Activated T-helper 2 cell treated with anti-CD3 and anti-CD28 coated beads, Interferon-gamma antibody, Interleukin-2, Interleukin-4, amounts not matched to agents 10 μg/mL and 5 μg/mL and 100 μg/mL, durations not matched to agents 14 hours and 24 hours and 36 hours (primary cell): ENCODE measurements at regions of chr19 and their contacts with region 1.

Region 1: GRCh38 chr19:46487802-46488445 is 7.7 kb downstream of the PNMA8B start:
- DNase-seq: peak; percentile 66
- H3K4me3 Mint-ChIP-seq: no peak overlapping the region
- H3K27ac Mint-ChIP-seq: no peak overlapping the region
- H3K4me1 Mint-ChIP-seq: peaks cover 3% of the 10 kb centered on the region
- H3K27me3 Mint-ChIP-seq: peaks cover 64% of the 10 kb centered on the region

Region 2: GRCh38 chr19:46049597-46049996 is 438.3 kb before region 1 on chr19:
- intact Hi-C with region 1: no loop called
- DNase-seq: no peak
- H3K4me3 Mint-ChIP-seq: no peak overlapping the region
- H3K27ac Mint-ChIP-seq: no peak overlapping the region
- H3K4me1 Mint-ChIP-seq: no peaks in the 10 kb centered on the region
- H3K27me3 Mint-ChIP-seq: peaks cover 69% of the 10 kb centered on the region

Region 3: GRCh38 chr19:46283771-46284170 is 204.2 kb before region 1 on chr19:
- intact Hi-C with region 1: loop called (anchors 2 kb)
- DNase-seq: no peak
- H3K4me3 Mint-ChIP-seq: no peak overlapping the region
- H3K27ac Mint-ChIP-seq: no peak overlapping the region
- H3K4me1 Mint-ChIP-seq: no peaks in the 10 kb centered on the region
- H3K27me3 Mint-ChIP-seq: peaks cover 7% of the 10 kb centered on the region

Region 4: DNA sequence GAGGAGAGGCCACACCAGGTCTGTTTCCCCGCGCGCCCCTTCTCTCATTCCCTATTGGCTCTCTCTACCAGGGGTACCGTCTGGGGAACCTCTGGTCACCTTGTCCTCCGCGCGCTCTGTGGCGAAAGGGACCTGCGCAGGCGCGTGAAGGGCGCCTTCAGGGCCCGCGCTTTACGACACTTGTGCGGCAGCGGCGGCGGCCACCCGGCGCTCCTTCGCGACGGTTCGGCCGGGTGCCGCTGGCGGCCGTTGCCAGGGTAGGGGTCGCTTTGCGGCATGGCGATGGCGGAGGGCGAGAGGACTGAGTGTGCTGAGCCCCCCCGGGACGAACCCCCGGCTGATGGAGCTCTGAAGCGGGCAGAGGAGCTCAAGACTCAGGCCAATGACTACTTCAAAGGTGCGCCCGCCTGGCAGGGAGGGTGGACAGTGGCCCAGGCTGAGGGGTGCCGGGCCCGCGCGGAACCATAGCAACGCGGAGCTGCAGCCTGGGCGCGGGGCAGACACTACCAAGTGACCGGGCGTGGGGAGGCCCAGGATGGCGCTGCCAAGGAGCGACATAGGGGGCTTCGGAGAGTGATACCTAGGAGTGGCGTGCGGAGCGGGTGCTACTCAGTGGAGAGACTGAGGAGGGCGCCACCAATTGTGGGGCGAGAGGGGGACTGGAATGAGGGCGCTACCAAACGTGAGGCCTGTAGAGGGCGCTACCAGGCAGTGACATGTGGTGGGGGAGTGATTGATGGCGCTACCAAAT is 140.9 kb before region 1 on chr19 and contains the start of gene PPP5C:
- intact Hi-C with region 1: no loop called
- DNase-seq: peak; percentile 86
- H3K4me3 Mint-ChIP-seq: peak within 1 kb of the TSS; percentile 89
- H3K27ac Mint-ChIP-seq: peak within 1 kb of the TSS; percentile 86
- H3K4me1 Mint-ChIP-seq: peaks cover 46% of the 10 kb centered on the region
- H3K27me3 Mint-ChIP-seq: peaks cover 14% of the 10 kb centered on the region
- total RNA-seq, gene PPP5C: 136 TPM in 2 replicates

Region 5: DNA sequence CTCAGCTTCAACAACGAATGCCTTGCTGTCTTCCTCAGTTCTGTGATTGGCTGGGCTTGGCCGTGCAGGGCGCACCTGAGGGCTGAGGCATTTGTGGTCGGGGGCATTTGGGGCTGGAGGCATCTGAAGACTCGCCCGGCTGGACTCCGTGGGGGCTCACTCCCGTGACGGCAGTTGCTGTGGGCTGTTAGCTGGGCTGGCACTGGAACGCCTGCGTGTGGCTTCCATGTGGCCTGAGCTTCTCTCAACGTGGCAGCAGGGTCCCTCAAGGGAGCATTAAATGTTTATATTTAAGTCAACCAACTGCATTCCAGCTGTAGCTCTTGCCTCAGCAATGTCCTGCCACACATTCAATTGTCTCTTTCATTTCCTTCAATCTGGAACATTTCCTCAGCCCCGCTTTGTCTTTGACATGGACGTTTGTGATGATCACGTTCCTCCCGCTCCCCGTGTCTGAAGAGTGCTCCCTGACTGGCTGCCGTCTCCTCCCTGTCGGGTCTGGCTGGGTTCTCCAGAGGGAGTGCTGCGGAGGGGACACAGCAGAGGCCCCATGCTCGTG is 95.6 kb before region 1 on chr19:
- intact Hi-C with region 1: loop called (anchors 2 kb)
- DNase-seq: no peak
- H3K4me3 Mint-ChIP-seq: no peak overlapping the region
- H3K27ac Mint-ChIP-seq: no peak overlapping the region
- H3K4me1 Mint-ChIP-seq: peaks cover 4% of the 10 kb centered on the region
- H3K27me3 Mint-ChIP-seq: no peaks in the 10 kb centered on the region

Region 6: GRCh38 chr19:46402725-46403124 is 85.2 kb before region 1 on chr19:
- intact Hi-C with region 1: loop called (anchors 1 kb)
- DNase-seq: no peak
- H3K4me3 Mint-ChIP-seq: no peak overlapping the region
- H3K27ac Mint-ChIP-seq: no peak overlapping the region
- H3K4me1 Mint-ChIP-seq: peaks cover 7% of the 10 kb centered on the region
- H3K27me3 Mint-ChIP-seq: peaks cover 51% of the 10 kb centered on the region

Region 7: DNA sequence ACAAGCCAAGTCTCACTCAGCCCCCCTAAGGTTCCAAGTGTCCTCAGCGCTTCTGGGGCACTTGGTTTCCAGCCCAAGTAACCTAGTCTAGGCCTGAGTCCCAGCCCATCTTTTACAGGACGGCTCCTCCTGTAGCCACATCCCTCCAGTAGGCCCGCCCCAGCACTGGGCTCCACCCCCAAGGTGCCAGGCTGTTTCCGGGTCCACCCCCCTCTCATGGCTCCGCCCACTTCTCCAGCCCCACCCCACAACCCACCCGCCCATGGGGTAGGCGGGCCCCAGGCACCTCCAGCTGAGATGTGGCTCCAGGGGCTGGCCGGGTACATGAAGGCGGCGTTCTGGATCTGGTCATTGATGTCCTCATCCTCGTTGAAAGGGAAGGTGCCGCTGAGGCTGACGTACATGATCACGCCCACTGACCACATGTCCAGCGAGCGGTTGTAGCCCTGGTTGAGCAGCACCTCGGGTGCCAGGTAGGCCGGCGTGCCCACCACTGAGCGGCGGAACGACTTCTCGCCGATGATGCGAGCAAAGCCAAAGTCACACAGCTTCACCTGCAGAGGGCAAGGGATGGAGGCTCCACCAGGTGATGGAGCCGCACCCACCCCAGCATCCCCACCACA is 190.3 kb after region 1 on chr19:
- intact Hi-C with region 1: no loop called
- DNase-seq: peak; percentile 56
- H3K4me3 Mint-ChIP-seq: no peak overlapping the region
- H3K27ac Mint-ChIP-seq: peak overlapping the region; percentile 46
- H3K4me1 Mint-ChIP-seq: peaks cover 8% of the 10 kb centered on the region
- H3K27me3 Mint-ChIP-seq: no peaks in the 10 kb centered on the region